Breast epithelium (tissue), 4 donors: ENCODE measurements at regions of chr1 and their contacts with region 1.

Region 1: DNA sequence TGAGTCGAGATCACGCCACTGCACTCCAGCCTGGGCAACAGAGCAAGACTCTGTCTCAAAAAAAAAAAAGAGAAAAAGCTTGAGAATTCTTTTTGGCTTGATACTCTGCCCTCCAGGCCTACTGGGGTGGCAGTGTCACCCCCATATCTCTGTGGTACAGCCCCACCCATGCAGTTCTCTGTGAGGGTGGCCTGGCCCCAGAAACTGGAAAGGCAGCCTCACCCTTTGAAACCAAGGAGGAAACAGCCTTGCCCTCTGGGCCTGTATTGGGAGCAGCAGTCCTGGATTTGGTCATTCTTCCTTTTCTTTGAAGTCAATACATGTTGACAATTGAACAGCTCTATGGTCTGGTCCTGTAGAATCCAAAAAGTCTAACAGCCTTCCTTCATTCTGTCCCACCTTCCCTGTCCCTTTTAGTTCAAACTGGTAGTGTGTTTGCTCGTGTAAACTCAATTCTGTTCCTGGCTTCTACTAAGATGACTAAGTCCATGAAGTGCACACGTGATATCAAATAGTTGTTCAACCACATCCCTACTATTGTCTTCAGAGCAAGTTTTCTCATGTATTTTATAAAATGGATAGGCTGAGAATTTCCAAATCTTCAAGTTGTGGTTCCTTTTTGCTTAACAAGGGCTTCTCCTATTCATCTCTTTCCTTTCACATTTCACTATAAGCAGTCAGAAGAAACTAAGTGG is 13.2 kb downstream of the ST7L start:
- DNase-seq: no peak
- H3K4me3 ChIP-seq: no peak overlapping the region
- H3K27ac ChIP-seq: no peak overlapping the region
- H3K4me1 ChIP-seq: no peaks in the 10 kb centered on the region
- H3K27me3 ChIP-seq: no peaks in the 10 kb centered on the region
- CTCF ChIP-seq: no peak
- POLR2A ChIP-seq: no peak

Region 2: DNA sequence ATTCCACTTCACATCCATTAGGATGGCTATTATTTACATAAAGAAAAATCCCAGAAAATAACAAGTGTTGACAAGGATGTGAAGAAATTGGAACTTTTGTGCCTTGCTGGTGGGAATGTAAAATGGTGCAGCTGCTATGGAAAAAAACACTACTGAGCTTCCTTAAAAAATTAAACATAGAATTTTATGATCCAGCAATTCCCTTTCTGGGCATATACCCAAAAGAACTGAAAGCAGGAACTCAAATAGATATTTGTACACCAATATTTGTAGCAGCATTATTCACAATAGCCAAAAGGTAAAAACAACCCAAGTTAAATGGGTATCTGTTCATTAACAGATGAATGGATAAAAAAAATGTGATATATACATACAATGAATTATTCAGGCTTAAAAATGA is 51.4 kb before region 1 on chr1:
- intact Hi-C with region 1: loop called (anchors 2 kb)
- DNase-seq: no peak
- H3K4me3 ChIP-seq: no peak overlapping the region
- H3K27ac ChIP-seq: no peak overlapping the region
- H3K4me1 ChIP-seq: no peaks in the 10 kb centered on the region
- H3K27me3 ChIP-seq: no peaks in the 10 kb centered on the region
- CTCF ChIP-seq: no peak
- POLR2A ChIP-seq: no peak

Region 3: GRCh38 chr1:112625696-112626095 is 19.9 kb after region 1 on chr1:
- intact Hi-C with region 1: no loop called
- DNase-seq: no peak
- H3K4me3 ChIP-seq: no peak overlapping the region
- H3K27ac ChIP-seq: no peak overlapping the region
- H3K4me1 ChIP-seq: no peaks in the 10 kb centered on the region
- H3K27me3 ChIP-seq: no peaks in the 10 kb centered on the region
- CTCF ChIP-seq: no peak
- POLR2A ChIP-seq: no peak

Region 4: GRCh38 chr1:113109908-113110554 is 504.3 kb after region 1 on chr1:
- intact Hi-C with region 1: no loop called
- DNase-seq: no peak
- H3K4me3 ChIP-seq: no peak overlapping the region
- H3K27ac ChIP-seq: peak overlapping the region in 1 of 2 donors; percentile 65
- H3K4me1 ChIP-seq: no peaks in the 10 kb centered on the region
- H3K27me3 ChIP-seq: no peaks in the 10 kb centered on the region
- CTCF ChIP-seq: peak in 1 of 3 donors; percentile 30
- POLR2A ChIP-seq: no peak

Region 5: DNA sequence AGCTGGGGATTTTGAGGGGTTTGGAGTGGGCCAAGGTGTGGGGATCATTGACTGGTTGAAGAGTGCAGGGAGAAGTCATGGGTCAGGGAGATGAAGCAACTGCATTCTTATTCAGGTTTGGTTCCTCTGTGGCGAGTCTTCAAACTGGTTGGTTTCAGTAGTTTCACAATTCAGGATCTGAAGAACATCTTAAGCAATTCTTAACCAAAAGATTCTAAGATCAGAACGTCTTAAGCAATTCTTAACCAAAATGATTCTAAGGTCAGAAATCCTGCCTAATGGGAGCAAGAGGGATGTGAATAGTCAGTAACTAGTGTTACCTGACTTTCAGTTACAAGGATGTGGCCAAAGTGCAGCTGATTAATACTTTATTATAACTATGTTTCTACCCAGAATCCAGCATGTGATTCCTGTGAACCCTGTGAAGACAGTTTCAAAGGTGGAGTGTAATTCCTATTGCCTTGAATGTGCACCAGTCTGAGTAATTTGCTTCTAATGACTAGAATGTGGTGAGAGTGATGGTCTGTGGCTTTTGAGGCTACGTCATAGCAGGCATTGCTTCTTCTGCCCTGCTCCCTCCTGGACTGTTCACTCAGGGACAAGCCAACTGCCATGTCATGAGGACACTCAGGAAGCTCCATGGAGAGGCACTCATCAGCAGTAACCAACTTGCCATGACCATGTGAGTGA is 1434.7 kb after region 1 on chr1:
- intact Hi-C with region 1: no loop called
- DNase-seq: no peak
- H3K4me3 ChIP-seq: no peak overlapping the region
- H3K27ac ChIP-seq: no peak overlapping the region
- H3K4me1 ChIP-seq: no peaks in the 10 kb centered on the region
- H3K27me3 ChIP-seq: no peaks in the 10 kb centered on the region
- CTCF ChIP-seq: no peak
- POLR2A ChIP-seq: no peak